ENCODE measurements at regions of chr11 and their contacts with region 1.

Region 1: GRCh38 chr11:75394085-75394840 is 5.1 kb upstream of the RPS3 start:
- DNase-seq: no peak
- ATAC-seq: no peak
- H3K4me3 ChIP-seq: no peak overlapping the region
- H3K4me3 Mint-ChIP-seq: no peak overlapping the region
- H3K27ac ChIP-seq: no peak overlapping the region
- H3K27ac Mint-ChIP-seq: no peak overlapping the region
- H3K4me1 ChIP-seq: peaks cover 0 to 5% of the 10 kb centered on the region in 2 experiments
- H3K4me1 Mint-ChIP-seq: peaks cover 2 to 3% (median 3%) of the 10 kb centered on the region in 3 donors
- H3K27me3 ChIP-seq: peaks cover 0 to 9% of the 10 kb centered on the region in 2 experiments
- H3K27me3 Mint-ChIP-seq: peaks cover 0 to 1% of the 10 kb centered on the region in 2 donors

Region 2: GRCh38 chr11:75174781-75175370 is 219.4 kb before region 1 on chr11:
- CTCF ChIA-PET with region 1: no interaction called
- POLR2A ChIA-PET with region 1: no interaction called
- DNase-seq: peak in 2 of 35 experiments; percentile 12 to 21
- ATAC-seq: peak in 3 of 4 experiments; percentile 71 to 87 (median 85)
- H3K4me3 ChIP-seq: no peak overlapping the region
- H3K4me3 Mint-ChIP-seq: peak overlapping the region in 1 of 3 donors; percentile 11
- H3K27ac ChIP-seq: no peak overlapping the region
- H3K27ac Mint-ChIP-seq: peak overlapping the region; percentile 78 to 85
- H3K4me1 ChIP-seq: peaks cover 0 to 16% of the 10 kb centered on the region in 2 experiments
- H3K4me1 Mint-ChIP-seq: peaks cover 13 to 16% (median 15%) of the 10 kb centered on the region in 3 donors
- H3K27me3 ChIP-seq: peaks cover 0 to 8% of the 10 kb centered on the region in 2 experiments
- H3K27me3 Mint-ChIP-seq: no peaks in the 10 kb centered on the region

Region 3: DNA sequence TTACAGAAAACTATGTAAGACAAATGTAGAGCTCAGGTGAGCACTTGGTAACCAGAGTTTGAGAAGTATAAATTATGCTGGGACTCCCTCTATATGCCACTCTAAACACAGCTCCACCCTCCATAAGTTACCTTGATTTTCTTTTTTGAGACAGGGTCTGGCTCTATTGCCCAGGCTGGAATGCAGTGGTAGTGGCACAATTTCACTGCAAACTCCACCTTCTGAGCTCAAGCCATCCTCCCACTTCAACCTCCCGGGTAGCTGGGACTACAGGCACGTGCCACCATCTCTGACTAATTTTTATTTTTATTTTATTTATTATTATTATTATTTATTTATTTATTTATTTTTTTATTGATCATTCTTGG is 14.6 kb after region 1 on chr11:
- CTCF ChIA-PET with region 1: interaction called in 1 of 2 experiments, 13 read pairs
- POLR2A ChIA-PET with region 1: no interaction called
- DNase-seq: no peak
- ATAC-seq: no peak
- H3K4me3 ChIP-seq: no peak overlapping the region
- H3K4me3 Mint-ChIP-seq: no peak overlapping the region
- H3K27ac ChIP-seq: no peak overlapping the region
- H3K27ac Mint-ChIP-seq: no peak overlapping the region
- H3K4me1 ChIP-seq: peaks cover 3 to 4% of the 10 kb centered on the region in 2 experiments
- H3K4me1 Mint-ChIP-seq: peaks cover 17 to 26% (median 22%) of the 10 kb centered on the region in 3 donors
- H3K27me3 ChIP-seq: no peaks in the 10 kb centered on the region
- H3K27me3 Mint-ChIP-seq: no peaks in the 10 kb centered on the region

Measured in T-cell (primary cell).